ENCODE measurements at regions of chr13 and their contacts with region 1.

Region 1: DNA sequence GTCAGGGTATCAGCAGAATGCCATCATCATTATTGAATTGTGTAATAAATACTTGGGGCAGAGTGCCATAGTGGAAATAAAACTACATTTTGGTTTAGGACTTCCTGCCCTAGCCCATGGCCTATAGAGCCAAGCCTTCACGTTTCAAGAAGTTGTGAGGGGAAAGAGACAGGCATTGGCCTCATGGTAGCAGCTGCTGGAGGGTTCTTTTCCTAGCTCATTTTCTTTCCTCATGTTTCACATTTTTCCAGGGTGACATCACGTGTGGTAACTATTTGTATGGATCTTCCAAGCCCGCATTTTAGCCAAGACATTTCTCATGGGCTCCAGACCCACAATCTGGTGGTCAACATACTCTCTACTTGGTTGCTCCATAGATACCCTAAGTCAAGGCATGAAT is 80.4 kb downstream of the LRCH1 start:
- DNase-seq: no peak
- H3K4me3 Mint-ChIP-seq: no peak overlapping the region
- H3K27ac Mint-ChIP-seq: no peak overlapping the region
- H3K4me1 Mint-ChIP-seq: peaks cover 35% of the 10 kb centered on the region
- H3K27me3 Mint-ChIP-seq: no peaks in the 10 kb centered on the region

Region 2: DNA sequence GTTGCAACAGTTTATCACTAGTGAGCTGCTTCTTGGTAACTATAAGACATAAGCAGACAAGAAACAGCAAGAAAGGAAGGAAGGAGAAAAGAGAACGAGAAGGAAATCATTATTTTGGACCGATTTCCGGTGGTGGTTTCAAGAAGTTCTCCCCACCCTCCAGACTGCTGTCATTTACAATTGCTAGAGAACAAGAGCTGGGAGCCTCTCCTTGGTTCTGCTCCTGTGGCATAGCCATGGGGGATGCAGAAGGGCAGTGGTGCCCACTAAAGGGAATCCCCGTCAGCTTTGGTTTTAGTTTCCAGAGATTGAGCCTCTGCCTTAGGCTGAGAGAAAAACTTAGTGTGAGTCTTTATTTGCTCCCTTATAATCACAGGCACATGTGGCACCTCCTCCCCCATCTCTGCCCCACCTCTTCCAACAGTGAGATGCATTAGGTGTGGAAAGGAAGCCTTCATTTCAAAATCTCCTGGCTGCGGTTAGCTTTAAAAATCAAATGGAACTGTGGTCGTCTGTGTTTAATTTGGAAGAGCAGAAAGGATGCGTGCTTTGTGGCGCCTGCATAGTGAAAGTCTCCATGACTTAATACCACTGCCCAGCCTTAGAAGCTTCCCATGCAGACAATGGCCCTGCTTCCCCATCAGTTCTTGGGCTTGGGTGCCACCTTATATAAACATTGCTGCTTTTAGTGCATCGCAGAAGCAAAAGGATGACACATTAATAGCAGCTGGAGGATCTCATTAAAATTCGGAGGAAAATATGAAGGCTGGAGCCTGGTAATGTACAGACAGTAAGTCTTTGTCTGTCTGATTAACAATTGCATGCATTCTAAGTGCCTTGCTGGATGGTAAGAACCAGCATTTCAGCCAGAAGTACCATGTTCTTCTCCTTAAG is 55.5 kb before region 1 on chr13:
- CTCF ChIA-PET with region 1: no interaction called
- intact Hi-C with region 1: loop called (anchors 2 kb)
- DNase-seq: peak; percentile 11
- H3K4me3 Mint-ChIP-seq: no peak overlapping the region
- H3K27ac Mint-ChIP-seq: no peak overlapping the region
- H3K4me1 Mint-ChIP-seq: peaks cover 62% of the 10 kb centered on the region
- H3K27me3 Mint-ChIP-seq: no peaks in the 10 kb centered on the region

Region 3: DNA sequence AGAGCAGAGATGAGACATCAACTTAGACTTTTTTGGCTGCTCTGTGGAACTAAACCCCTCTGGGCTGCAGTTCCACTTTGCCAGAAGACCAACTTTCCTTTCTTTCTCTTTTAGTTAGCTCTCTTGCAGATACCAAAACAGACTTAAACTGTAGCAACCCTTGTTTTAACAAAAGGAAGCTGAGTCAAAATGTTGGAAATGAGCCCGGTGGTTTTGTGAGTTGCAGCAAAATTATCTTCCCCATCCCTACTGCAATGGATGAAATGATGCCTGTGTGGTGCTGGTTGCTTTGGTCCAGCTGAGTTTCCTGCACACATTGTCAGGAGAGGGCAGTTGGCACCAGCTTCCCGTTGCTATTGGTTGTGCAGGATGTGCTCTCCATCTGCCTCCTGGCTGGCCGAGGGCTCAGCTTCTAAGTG is 34.9 kb after region 1 on chr13:
- CTCF ChIA-PET with region 1: no interaction called
- intact Hi-C with region 1: loop called (anchors 5 kb)
- DNase-seq: peak; percentile 58
- H3K4me3 Mint-ChIP-seq: peak overlapping the region; percentile 72
- H3K27ac Mint-ChIP-seq: peak overlapping the region; percentile 85
- H3K4me1 Mint-ChIP-seq: peaks cover 37% of the 10 kb centered on the region
- H3K27me3 Mint-ChIP-seq: no peaks in the 10 kb centered on the region

Measured in activated naive CD4-positive, alpha-beta T cell treated with anti-CD3 and anti-CD28 coated beads for 36 hours (primary cell).